ENCODE measurements at regions of chr17 and their contacts with region 1.

Region 1: GRCh38 chr17:18141210-18141803 is 32.8 kb downstream of the MYO15A start:
- DNase-seq: peak in 1 of 2 donors; percentile 46
- ATAC-seq: peak in 4 of 8 donors; percentile 32 to 63 (median 48)
- H3K4me3 ChIP-seq: no peak overlapping the region
- H3K27ac ChIP-seq: no peak overlapping the region
- H3K4me1 ChIP-seq: peaks cover 0 to 6% (median 0%) of the 10 kb centered on the region in 9 donors
- H3K27me3 ChIP-seq: no peaks in the 10 kb centered on the region
- CTCF ChIP-seq: peak; percentile 42 to 80 (median 68)

Region 2: DNA sequence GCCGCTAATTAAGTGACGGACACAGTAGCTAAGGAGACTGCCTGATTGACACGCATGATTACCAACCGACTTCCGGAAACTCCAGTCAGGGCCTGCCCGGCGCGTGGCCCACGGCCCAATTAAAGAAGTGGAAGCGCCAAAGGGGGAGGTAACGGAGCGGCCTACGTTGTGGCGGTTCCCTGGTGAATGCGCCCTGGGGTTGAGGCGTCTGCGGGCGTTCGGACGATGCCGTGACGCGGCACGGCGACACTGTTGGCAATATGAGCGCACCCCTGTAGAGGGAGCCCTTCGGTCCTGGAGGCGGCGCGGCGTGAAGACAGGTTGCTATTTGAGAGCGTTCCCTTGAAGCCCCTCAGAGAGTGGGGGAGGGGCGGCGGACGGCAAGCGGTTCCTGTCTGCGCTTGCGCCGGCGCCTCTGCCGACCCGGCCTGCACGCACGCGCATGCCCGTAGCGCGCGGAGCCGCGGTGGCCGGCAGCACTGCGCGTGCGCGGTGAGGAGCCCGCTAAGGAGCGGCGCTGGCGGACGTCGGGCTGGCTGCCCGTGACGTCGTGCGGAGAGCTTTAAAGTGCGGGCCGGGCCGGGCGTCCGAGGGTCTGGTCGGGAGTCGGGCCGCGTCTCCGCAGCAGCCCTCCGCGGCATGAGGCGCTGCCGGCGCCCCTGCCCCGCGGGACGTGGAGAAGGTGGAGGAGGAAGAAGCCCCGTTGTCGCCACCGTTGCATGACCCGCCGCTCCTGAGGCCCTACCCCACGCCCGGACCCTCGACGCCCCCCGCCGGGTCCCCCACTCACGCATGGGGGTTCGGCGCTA is 42.2 kb after region 1 on chr17 and contains the start of gene ALKBH5:
- intact Hi-C with region 1: loop called in 3 of 10 experiments (anchors 5 kb)
- DNase-seq: peak; percentile 95 to 99
- ATAC-seq: peak; percentile 92 to 97 (median 94)
- H3K4me3 ChIP-seq: peak within 1 kb of the TSS; percentile 67 to 99 (median 87)
- H3K27ac ChIP-seq: peak within 1 kb of the TSS; percentile 89 to 100 (median 97)
- H3K4me1 ChIP-seq: peaks cover 16 to 58% (median 50%) of the 10 kb centered on the region in 9 donors
- H3K27me3 ChIP-seq: no peaks in the 10 kb centered on the region
- CTCF ChIP-seq: peak; percentile 6 to 56 (median 31)
- total RNA-seq, gene ALKBH5: 163 to 208 (median 194) TPM

Region 3: GRCh38 chr17:18203308-18203707 is 62.0 kb after region 1 on chr17:
- intact Hi-C with region 1: loop called in 1 of 10 experiments (anchors 10 kb)
- DNase-seq: no peak
- ATAC-seq: peak in 1 of 8 donors; percentile 36
- H3K4me3 ChIP-seq: no peak overlapping the region
- H3K27ac ChIP-seq: no peak overlapping the region
- H3K4me1 ChIP-seq: peaks cover 10 to 79% (median 50%) of the 10 kb centered on the region in 9 donors
- H3K27me3 ChIP-seq: no peaks in the 10 kb centered on the region
- CTCF ChIP-seq: no peak

Region 4: DNA sequence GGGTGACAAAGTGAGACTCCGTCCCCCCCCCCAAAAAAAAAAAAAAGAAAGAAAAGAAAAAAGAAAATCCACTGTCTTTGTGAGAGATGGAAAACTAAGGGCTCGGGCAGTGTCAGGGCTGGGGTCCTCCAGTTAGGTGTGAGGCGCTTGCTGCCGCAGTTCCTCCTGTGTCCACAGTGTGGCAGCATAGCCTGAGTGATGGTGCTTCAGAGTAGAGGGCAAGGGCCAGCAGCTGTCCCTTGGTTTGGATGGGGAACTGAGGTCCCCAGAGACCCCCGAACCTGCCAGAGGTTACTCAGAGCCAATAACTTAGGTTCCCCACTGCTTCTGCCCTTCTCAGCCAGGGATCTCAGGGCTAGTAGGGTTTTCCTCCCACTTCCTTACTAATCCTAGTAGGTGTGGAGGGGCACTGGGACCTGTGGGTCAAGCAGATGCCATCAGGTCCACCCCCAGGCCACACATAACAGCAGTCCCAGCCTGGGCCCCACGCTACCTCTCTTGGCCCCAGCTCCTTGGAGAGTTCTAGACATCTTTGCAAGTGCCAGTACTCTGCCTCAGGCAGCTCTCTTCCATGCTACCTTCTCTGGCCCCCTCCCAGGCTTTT is 76.2 kb after region 1 on chr17:
- intact Hi-C with region 1: loop called in 7 of 10 experiments (anchors 2 to 10 kb)
- DNase-seq: peak; percentile 73 to 79
- ATAC-seq: peak; percentile 75 to 89 (median 86)
- H3K4me3 ChIP-seq: no peak overlapping the region
- H3K27ac ChIP-seq: no peak overlapping the region
- H3K4me1 ChIP-seq: peaks cover 0 to 18% (median 5%) of the 10 kb centered on the region in 9 donors
- H3K27me3 ChIP-seq: no peaks in the 10 kb centered on the region
- CTCF ChIP-seq: peak; percentile 81 to 94 (median 91)

Measured in heart right ventricle (tissue), 16 donors.